CD8-positive, alpha-beta T cell (primary cell): ENCODE measurements at regions of chr7 and their contacts with region 1.

Region 1: GRCh38 chr7:150937848-150938561 is 40.1 kb downstream of the KCNH2 start:
- DNase-seq: peak in 4 of 9 experiments; percentile 21 to 61 (median 38)
- ATAC-seq: peak; percentile 60
- H3K4me3 ChIP-seq: peak overlapping the region in 1 of 2 experiments; percentile 6
- H3K4me3 Mint-ChIP-seq: peak overlapping the region; percentile 65
- H3K27ac ChIP-seq: no peak overlapping the region
- H3K27ac Mint-ChIP-seq: no peak overlapping the region
- H3K4me1 ChIP-seq: peaks cover 37% of the 10 kb centered on the region
- H3K4me1 Mint-ChIP-seq: peaks cover 30% of the 10 kb centered on the region
- H3K27me3 ChIP-seq: no peaks in the 10 kb centered on the region
- H3K27me3 Mint-ChIP-seq: no peaks in the 10 kb centered on the region
- CTCF ChIP-seq: no peak

Region 2: GRCh38 chr7:150903606-150904005 is 34.4 kb before region 1 on chr7:
- CTCF ChIA-PET with region 1: interaction called, 4 read pairs
- POLR2A ChIA-PET with region 1: no interaction called
- intact Hi-C with region 1: loop called in 1 of 2 experiments (anchors 5 kb)
- DNase-seq: no peak
- ATAC-seq: no peak
- H3K4me3 ChIP-seq: no peak overlapping the region
- H3K4me3 Mint-ChIP-seq: no peak overlapping the region
- H3K27ac ChIP-seq: no peak overlapping the region
- H3K27ac Mint-ChIP-seq: no peak overlapping the region
- H3K4me1 ChIP-seq: peaks cover 2% of the 10 kb centered on the region
- H3K4me1 Mint-ChIP-seq: peaks cover 2% of the 10 kb centered on the region
- H3K27me3 ChIP-seq: peaks cover 0 to 5% of the 10 kb centered on the region in 2 experiments
- H3K27me3 Mint-ChIP-seq: peaks cover 40% of the 10 kb centered on the region
- CTCF ChIP-seq: no peak

Region 3: GRCh38 chr7:152202056-152202455 is 1264.1 kb after region 1 on chr7:
- CTCF ChIA-PET with region 1: no interaction called
- POLR2A ChIA-PET with region 1: no interaction called
- intact Hi-C with region 1: no loop called
- DNase-seq: no peak
- ATAC-seq: no peak
- H3K4me3 ChIP-seq: no peak overlapping the region
- H3K4me3 Mint-ChIP-seq: no peak overlapping the region
- H3K27ac ChIP-seq: no peak overlapping the region
- H3K27ac Mint-ChIP-seq: no peak overlapping the region
- H3K4me1 ChIP-seq: no peaks in the 10 kb centered on the region
- H3K4me1 Mint-ChIP-seq: no peaks in the 10 kb centered on the region
- H3K27me3 ChIP-seq: no peaks in the 10 kb centered on the region
- H3K27me3 Mint-ChIP-seq: no peaks in the 10 kb centered on the region
- CTCF ChIP-seq: no peak